ENCODE measurements at regions of chr22 and their contacts with region 1.

Region 1: GRCh38 chr22:23289851-23290724 is 109.8 kb downstream of the BCR start:
- DNase-seq: peak; percentile 89
- H3K4me3 ChIP-seq: no peak overlapping the region; a peak in 1 of 4 replicates
- H3K27ac ChIP-seq: no peak overlapping the region
- H3K4me1 ChIP-seq: no peaks in the 10 kb centered on the region; a peak in 1 of 4 replicates
- H3K27me3 ChIP-seq: no peaks in the 10 kb centered on the region
- CTCF ChIP-seq: peak; percentile 84
- EP300 ChIP-seq: no peak
- RAD21 ChIP-seq: peak; percentile 54

Region 2: DNA sequence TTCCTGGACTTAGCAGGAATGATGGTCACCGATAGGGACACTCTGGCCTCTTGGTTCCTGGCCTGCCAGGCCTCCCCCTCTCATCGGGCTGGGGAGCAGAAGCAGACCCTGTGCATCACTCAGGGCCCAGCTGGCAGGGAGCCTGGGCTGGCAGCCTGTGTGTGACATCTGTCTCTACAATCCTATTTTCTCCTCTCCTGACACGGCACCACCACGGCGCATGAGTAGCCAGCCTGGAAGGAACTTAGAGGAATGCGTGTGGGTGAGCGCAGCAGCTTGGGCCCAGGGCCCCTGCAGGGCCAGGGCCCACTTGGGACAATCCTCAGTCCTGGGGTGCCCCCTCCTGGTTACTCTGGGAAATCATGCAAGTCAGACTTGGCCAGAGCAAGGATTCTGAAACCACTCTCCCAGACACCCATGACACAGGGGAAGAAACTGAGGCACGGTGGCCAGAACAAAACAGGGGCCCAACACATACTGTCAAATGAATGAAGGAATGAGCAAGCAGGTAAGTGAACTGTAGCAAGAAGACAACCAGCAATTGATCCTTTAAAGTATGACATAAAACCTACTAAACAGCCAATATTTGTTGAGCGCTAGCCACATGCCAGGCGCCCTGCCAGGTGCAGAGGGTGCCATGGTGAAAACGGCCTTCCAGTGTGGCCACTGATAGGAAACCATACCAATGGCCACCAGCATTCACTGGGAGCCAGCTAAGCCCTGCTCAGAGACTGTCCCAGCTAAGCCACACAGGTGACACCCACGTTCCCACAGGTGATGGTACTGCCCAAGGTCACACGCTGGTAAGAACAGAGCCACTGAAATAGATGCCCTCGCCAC is 161.6 kb before region 1 on chr22:
- CTCF ChIA-PET with region 1: interaction called, 11 read pairs
- POLR2A ChIA-PET with region 1: no interaction called
- DNase-seq: peak; percentile 90
- H3K4me3 ChIP-seq: no peak overlapping the region; a peak in 1 of 4 replicates
- H3K27ac ChIP-seq: no peak overlapping the region; a peak in 1 of 4 replicates
- H3K4me1 ChIP-seq: peaks cover 0 to 22% of the 10 kb centered on the region in 2 experiments; a peak in 1 of 4 replicates
- H3K27me3 ChIP-seq: no peaks in the 10 kb centered on the region
- CTCF ChIP-seq: peak; percentile 86
- EP300 ChIP-seq: peak in 1 of 2 experiments; percentile 61; a peak in 1 of 4 replicates
- RAD21 ChIP-seq: peak; percentile 97

Region 3: GRCh38 chr22:23137905-23138561 is 152.1 kb before region 1 on chr22:
- CTCF ChIA-PET with region 1: interaction called, 11 read pairs
- POLR2A ChIA-PET with region 1: no interaction called
- DNase-seq: no peak
- H3K4me3 ChIP-seq: no peak overlapping the region
- H3K27ac ChIP-seq: no peak overlapping the region
- H3K4me1 ChIP-seq: peaks cover 6 to 9% of the 10 kb centered on the region in 2 experiments; a peak in 1 of 4 replicates
- H3K27me3 ChIP-seq: no peaks in the 10 kb centered on the region
- CTCF ChIP-seq: no peak
- EP300 ChIP-seq: no peak
- RAD21 ChIP-seq: no peak

Region 4: DNA sequence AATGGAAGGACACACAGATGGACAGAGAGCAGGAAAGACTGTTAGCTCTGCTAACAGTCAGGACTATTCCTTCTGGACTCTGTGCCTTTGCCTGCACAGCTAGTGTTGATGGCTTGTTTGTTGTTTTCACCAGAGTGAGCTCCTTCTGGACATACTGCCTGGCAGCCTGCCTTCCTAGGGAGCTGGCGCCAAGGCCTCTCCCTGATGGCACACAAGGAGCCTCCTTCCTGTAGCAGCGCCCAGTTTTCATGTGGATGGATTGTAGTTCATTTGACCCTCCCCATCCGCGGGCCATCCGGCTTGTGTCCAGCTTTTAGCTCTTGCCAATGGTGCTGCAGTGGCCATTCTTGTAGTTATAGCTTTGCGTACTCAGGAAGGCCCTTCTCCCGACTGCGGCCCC is 126.4 kb before region 1 on chr22:
- CTCF ChIA-PET with region 1: interaction called, 587 read pairs
- POLR2A ChIA-PET with region 1: no interaction called
- DNase-seq: no peak
- H3K4me3 ChIP-seq: no peak overlapping the region
- H3K27ac ChIP-seq: no peak overlapping the region
- H3K4me1 ChIP-seq: peaks cover 0 to 12% of the 10 kb centered on the region in 2 experiments; a peak in 1 of 4 replicates
- H3K27me3 ChIP-seq: no peaks in the 10 kb centered on the region
- CTCF ChIP-seq: no peak
- EP300 ChIP-seq: no peak
- RAD21 ChIP-seq: no peak

Region 5: GRCh38 chr22:23270212-23270733 is 19.8 kb before region 1 on chr22:
- CTCF ChIA-PET with region 1: interaction called, 10 read pairs
- POLR2A ChIA-PET with region 1: no interaction called
- DNase-seq: no peak
- H3K4me3 ChIP-seq: no peak overlapping the region
- H3K27ac ChIP-seq: no peak overlapping the region
- H3K4me1 ChIP-seq: peaks cover 0 to 27% of the 10 kb centered on the region in 2 experiments; a peak in 1 of 4 replicates
- H3K27me3 ChIP-seq: no peaks in the 10 kb centered on the region
- CTCF ChIP-seq: no peak
- EP300 ChIP-seq: no peak
- RAD21 ChIP-seq: no peak

Region 6: GRCh38 chr22:23305922-23306374 is 15.9 kb after region 1 on chr22:
- CTCF ChIA-PET with region 1: interaction called, 17 read pairs
- POLR2A ChIA-PET with region 1: no interaction called
- DNase-seq: peak; percentile 75
- H3K4me3 ChIP-seq: no peak overlapping the region
- H3K27ac ChIP-seq: peak overlapping the region; percentile 42 to 62
- H3K4me1 ChIP-seq: peaks cover 12 to 18% of the 10 kb centered on the region in 2 experiments; a peak in 2 of 4 replicates
- H3K27me3 ChIP-seq: no peaks in the 10 kb centered on the region
- CTCF ChIP-seq: no peak
- EP300 ChIP-seq: no peak
- RAD21 ChIP-seq: no peak

Measured in SK-N-SH (cell line).